ENCODE measurements at regions of chr6 and their contacts with region 1.

Region 1: DNA sequence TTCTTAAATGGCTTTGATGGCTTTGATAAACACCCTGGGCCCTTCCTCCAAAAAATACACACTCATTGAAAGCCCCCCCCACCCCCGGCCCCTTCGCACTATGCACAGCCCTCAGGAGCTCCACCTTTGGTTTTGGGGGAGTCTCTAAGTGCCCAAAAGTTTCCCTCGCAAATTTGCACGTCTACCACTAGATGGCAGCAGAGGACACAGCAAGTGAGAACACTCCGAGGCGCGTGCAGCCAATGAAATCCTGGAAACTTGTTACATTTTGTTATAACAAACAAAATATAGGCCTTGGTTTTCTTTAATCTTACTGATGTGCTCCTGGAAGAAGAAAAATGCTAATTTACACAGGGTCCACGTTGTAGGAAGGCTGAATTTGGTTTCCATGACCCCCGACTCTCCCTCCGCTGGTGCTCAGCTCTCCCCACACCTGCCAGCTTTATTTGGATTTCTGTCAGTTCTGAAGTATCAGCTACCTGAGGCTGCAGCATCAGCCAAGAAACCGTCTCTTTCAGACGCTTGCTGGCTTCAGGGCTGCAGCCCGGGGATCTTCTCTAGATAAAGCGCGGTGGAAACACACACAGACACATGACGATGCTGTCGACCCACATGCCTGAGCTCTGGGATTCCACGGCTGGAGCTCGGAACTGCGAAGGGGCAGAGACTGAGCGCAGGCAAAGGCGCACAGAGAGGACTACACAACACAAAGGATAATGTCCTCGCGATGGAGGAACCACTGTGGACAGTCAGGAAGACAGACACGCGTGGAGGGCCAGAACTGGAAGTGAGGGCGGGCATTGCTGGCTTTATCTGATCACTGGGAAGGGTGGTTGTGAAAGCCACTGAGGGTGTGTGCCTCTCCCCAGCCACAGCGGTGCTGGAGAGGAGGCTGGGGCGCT is 148.4 kb upstream of the RPS6KA2 start:
- DNase-seq: peak; percentile 79
- ATAC-seq: peak; percentile 74
- H3K4me3 Mint-ChIP-seq: no peak overlapping the region
- H3K27ac Mint-ChIP-seq: no peak overlapping the region
- H3K4me1 Mint-ChIP-seq: no peaks in the 10 kb centered on the region
- H3K27me3 Mint-ChIP-seq: no peaks in the 10 kb centered on the region

Region 2: GRCh38 chr6:166156942-166157341 is 618.5 kb before region 1 on chr6:
- CTCF ChIA-PET with region 1: no interaction called
- POLR2A ChIA-PET with region 1: no interaction called
- intact Hi-C with region 1: no loop called
- DNase-seq: no peak
- ATAC-seq: no peak
- H3K4me3 Mint-ChIP-seq: no peak overlapping the region
- H3K27ac Mint-ChIP-seq: no peak overlapping the region
- H3K4me1 Mint-ChIP-seq: no peaks in the 10 kb centered on the region
- H3K27me3 Mint-ChIP-seq: peaks cover 6% of the 10 kb centered on the region

Region 3: GRCh38 chr6:166728957-166729441 is 46.4 kb before region 1 on chr6:
- CTCF ChIA-PET with region 1: no interaction called
- POLR2A ChIA-PET with region 1: no interaction called
- intact Hi-C with region 1: no loop called
- DNase-seq: no peak
- ATAC-seq: peak; percentile 33
- H3K4me3 Mint-ChIP-seq: no peak overlapping the region
- H3K27ac Mint-ChIP-seq: no peak overlapping the region
- H3K4me1 Mint-ChIP-seq: peaks cover 10% of the 10 kb centered on the region
- H3K27me3 Mint-ChIP-seq: no peaks in the 10 kb centered on the region

Region 4: DNA sequence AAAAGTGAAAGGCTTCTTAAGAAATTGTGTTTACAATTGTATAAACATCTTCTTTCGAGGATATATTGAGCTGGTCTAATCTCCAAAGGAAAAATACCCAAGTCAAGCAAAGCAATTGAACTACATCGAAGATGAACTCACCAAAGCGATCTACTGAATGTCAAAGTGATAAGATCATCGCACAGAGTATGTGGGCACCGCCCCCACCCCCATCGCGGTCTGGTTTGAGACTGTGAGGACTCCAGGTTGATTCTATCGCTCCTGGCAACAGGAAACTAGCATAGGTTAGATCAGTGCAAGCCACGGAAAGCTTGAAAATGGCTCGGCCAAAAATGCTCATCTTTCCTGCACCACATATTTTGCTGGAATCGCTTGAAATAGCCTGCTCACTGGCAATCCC is 15.1 kb before region 1 on chr6:
- CTCF ChIA-PET with region 1: interaction called, 28 read pairs
- POLR2A ChIA-PET with region 1: no interaction called
- intact Hi-C with region 1: no loop called
- DNase-seq: peak; percentile 87
- ATAC-seq: peak; percentile 90
- H3K4me3 Mint-ChIP-seq: no peak overlapping the region
- H3K27ac Mint-ChIP-seq: no peak overlapping the region
- H3K4me1 Mint-ChIP-seq: peaks cover 39% of the 10 kb centered on the region
- H3K27me3 Mint-ChIP-seq: peaks cover 10% of the 10 kb centered on the region

Region 5: GRCh38 chr6:166989427-166990032 is 214.1 kb after region 1 on chr6:
- CTCF ChIA-PET with region 1: interaction called, 22 read pairs
- POLR2A ChIA-PET with region 1: no interaction called
- intact Hi-C with region 1: loop called in 1 of 2 experiments (anchors 1 kb)
- DNase-seq: peak; percentile 19
- ATAC-seq: peak; percentile 78
- H3K4me3 Mint-ChIP-seq: no peak overlapping the region
- H3K27ac Mint-ChIP-seq: no peak overlapping the region
- H3K4me1 Mint-ChIP-seq: peaks cover 23% of the 10 kb centered on the region
- H3K27me3 Mint-ChIP-seq: no peaks in the 10 kb centered on the region

Region 6: DNA sequence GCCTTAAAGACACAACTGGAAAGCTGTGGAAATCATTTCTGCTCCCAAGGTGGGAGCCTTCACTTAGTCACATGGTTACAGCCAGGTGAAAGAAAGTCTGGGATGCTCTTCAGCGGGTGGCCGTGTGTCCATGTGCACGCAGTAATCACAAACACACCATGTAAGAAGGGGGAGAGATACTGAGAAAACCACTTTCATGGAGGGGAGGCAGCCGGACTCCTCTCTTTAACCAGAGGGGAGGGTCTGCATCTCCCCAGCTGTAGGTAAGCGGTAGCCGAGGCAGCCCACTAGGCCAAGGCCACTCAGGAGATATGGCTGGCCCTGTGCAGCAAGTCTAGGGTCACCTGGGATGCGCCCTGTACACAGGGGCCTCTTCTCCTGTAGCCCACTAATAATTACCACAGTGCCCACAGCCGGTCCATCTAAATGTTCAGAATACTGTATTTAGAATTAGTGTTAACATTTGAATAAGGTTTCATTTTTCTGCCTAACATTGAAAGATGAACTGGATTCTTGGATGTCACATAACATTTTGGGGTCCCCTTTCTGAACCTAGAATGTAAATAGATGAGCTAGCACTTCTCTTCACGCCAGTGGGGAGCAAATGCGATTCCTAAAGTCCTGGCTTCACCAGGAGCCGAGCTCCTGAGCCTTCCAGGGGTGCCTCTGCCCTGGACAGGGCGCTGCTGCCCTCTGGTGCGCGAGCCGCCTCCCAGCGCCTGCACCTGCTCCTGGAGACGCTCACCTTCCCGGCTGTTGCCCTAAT is 366.4 kb after region 1 on chr6:
- CTCF ChIA-PET with region 1: interaction called, 38 read pairs
- POLR2A ChIA-PET with region 1: no interaction called
- intact Hi-C with region 1: loop called (anchors 1 kb)
- DNase-seq: peak; percentile 75
- ATAC-seq: peak; percentile 85
- H3K4me3 Mint-ChIP-seq: no peak overlapping the region
- H3K27ac Mint-ChIP-seq: no peak overlapping the region
- H3K4me1 Mint-ChIP-seq: peaks cover 22% of the 10 kb centered on the region
- H3K27me3 Mint-ChIP-seq: peaks cover 3% of the 10 kb centered on the region

Region 7: GRCh38 chr6:167285077-167285770 is 509.8 kb after region 1 on chr6:
- CTCF ChIA-PET with region 1: interaction called, 5 read pairs
- POLR2A ChIA-PET with region 1: no interaction called
- intact Hi-C with region 1: loop called in 1 of 2 experiments (anchors 5 kb)
- DNase-seq: no peak
- ATAC-seq: no peak
- H3K4me3 Mint-ChIP-seq: no peak overlapping the region
- H3K27ac Mint-ChIP-seq: no peak overlapping the region
- H3K4me1 Mint-ChIP-seq: no peaks in the 10 kb centered on the region
- H3K27me3 Mint-ChIP-seq: no peaks in the 10 kb centered on the region

Region 8: DNA sequence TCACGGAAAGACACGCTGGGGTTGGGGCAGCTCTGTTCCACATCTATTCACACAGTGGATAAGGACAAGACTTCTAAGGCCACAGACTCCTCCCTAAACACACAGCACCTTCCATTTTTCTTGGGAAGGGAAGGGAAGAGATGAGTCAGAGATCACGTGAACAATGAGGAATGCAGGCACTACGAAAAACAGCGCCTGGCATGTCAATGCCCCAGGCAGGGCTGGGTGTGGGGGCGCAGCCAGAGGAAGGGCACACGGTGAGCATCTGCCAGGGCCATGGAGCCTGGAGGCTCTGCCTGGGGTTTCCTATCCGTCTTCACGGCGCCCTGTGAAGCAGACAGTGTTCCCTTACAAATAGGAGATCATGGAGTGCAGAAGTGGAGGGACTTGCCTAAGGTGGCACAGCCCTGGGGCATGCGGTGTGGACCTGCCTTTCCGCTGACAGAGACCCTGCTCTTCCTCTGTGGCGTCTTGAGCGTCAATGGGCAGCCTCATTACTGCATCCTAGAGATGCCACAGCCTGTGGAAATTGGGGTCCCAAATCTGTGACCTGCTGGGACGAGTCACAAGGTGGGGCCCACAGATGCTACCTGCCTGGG is 531.1 kb after region 1 on chr6:
- CTCF ChIA-PET with region 1: no interaction called
- POLR2A ChIA-PET with region 1: no interaction called
- intact Hi-C with region 1: loop called in 1 of 2 experiments (anchors 10 kb)
- DNase-seq: no peak
- ATAC-seq: no peak
- H3K4me3 Mint-ChIP-seq: no peak overlapping the region
- H3K27ac Mint-ChIP-seq: no peak overlapping the region
- H3K4me1 Mint-ChIP-seq: no peaks in the 10 kb centered on the region
- H3K27me3 Mint-ChIP-seq: peaks cover 6% of the 10 kb centered on the region

Measured in activated CD4-positive, alpha-beta T cell treated with anti-CD3 and anti-CD28 coated beads for 36 hours (primary cell).